ENCODE measurements at regions of chr12 and their contacts with region 1.

Region 1: DNA sequence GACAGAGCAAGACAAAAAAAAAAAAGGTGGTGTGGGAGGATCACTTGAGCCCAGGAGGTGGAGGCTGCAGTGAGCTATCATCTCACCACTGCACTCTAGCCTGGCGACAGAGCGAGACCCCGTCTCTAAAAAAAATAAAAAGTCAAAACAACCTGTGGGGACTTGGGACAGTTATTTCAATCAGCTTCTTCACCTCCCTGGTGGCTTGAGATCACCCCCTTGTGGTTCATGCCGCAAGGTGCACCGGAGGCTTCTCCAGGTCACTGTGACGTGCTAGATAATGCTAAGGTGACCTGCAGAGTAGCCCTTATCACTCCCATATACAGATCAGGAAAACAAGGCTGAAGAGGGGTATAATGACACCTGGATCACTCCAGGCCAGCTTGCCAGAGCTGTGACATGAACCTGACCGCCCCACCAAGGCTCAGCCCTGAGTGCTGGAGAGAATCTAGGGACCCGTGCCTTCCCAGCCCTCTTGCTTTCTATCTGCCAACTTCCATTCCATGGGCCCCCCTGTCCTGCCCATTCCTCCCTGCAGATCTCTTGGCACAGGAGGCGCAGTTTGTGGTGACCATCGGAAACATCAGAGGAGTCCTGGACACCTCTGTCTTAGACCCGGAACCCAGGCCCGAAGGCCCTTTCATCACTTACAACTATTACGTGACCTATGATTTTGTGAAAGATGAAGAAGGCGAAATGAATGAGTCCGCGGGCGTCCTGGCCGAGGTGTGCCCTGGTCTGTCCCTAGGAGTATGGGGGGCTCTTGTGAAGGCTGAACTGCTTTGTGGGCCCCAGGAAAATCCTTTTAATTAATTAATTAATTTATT is 8.1 kb downstream of the LRRC43 start:
- DNase-seq: peak; percentile 87
- H3K4me3 ChIP-seq: no peak overlapping the region; a peak in 1 of 4 replicates
- H3K27ac ChIP-seq: no peak overlapping the region
- H3K4me1 ChIP-seq: no peaks in the 10 kb centered on the region
- H3K27me3 ChIP-seq: no peaks in the 10 kb centered on the region
- CTCF ChIP-seq: peak; percentile 86
- EP300 ChIP-seq: no peak
- RAD21 ChIP-seq: peak; percentile 90

Region 2: GRCh38 chr12:122090759-122091515 is 100.1 kb before region 1 on chr12:
- CTCF ChIA-PET with region 1: no interaction called
- POLR2A ChIA-PET with region 1: no interaction called
- DNase-seq: no peak
- H3K4me3 ChIP-seq: no peak overlapping the region
- H3K27ac ChIP-seq: peak overlapping the region in 1 of 2 experiments; percentile 89; a peak in 2 of 4 replicates
- H3K4me1 ChIP-seq: peaks cover 9 to 11% of the 10 kb centered on the region in 2 experiments; a peak in 2 of 4 replicates
- H3K27me3 ChIP-seq: no peaks in the 10 kb centered on the region
- CTCF ChIP-seq: no peak
- EP300 ChIP-seq: no peak
- RAD21 ChIP-seq: no peak

Region 3: GRCh38 chr12:122137681-122138080 is 53.4 kb before region 1 on chr12:
- CTCF ChIA-PET with region 1: interaction called, 85 read pairs
- POLR2A ChIA-PET with region 1: no interaction called
- DNase-seq: no peak
- H3K4me3 ChIP-seq: no peak overlapping the region
- H3K27ac ChIP-seq: no peak overlapping the region
- H3K4me1 ChIP-seq: no peaks in the 10 kb centered on the region
- H3K27me3 ChIP-seq: no peaks in the 10 kb centered on the region
- CTCF ChIP-seq: no peak
- EP300 ChIP-seq: no peak
- RAD21 ChIP-seq: no peak

Region 4: GRCh38 chr12:122148657-122149056 is 42.4 kb before region 1 on chr12:
- CTCF ChIA-PET with region 1: interaction called, 51 read pairs
- POLR2A ChIA-PET with region 1: no interaction called
- DNase-seq: no peak
- H3K4me3 ChIP-seq: no peak overlapping the region
- H3K27ac ChIP-seq: no peak overlapping the region
- H3K4me1 ChIP-seq: peaks cover 0 to 2% of the 10 kb centered on the region in 2 experiments; a peak in 1 of 4 replicates
- H3K27me3 ChIP-seq: no peaks in the 10 kb centered on the region
- CTCF ChIP-seq: no peak
- EP300 ChIP-seq: no peak
- RAD21 ChIP-seq: no peak

Region 5: GRCh38 chr12:122159882-122160281 is 31.2 kb before region 1 on chr12:
- CTCF ChIA-PET with region 1: interaction called, 21 read pairs
- POLR2A ChIA-PET with region 1: no interaction called
- DNase-seq: peak; percentile 27
- H3K4me3 ChIP-seq: no peak overlapping the region
- H3K27ac ChIP-seq: no peak overlapping the region
- H3K4me1 ChIP-seq: peaks cover 0 to 3% of the 10 kb centered on the region in 2 experiments; a peak in 1 of 4 replicates
- H3K27me3 ChIP-seq: no peaks in the 10 kb centered on the region
- CTCF ChIP-seq: no peak
- EP300 ChIP-seq: no peak
- RAD21 ChIP-seq: peak; percentile 49

Region 6: DNA sequence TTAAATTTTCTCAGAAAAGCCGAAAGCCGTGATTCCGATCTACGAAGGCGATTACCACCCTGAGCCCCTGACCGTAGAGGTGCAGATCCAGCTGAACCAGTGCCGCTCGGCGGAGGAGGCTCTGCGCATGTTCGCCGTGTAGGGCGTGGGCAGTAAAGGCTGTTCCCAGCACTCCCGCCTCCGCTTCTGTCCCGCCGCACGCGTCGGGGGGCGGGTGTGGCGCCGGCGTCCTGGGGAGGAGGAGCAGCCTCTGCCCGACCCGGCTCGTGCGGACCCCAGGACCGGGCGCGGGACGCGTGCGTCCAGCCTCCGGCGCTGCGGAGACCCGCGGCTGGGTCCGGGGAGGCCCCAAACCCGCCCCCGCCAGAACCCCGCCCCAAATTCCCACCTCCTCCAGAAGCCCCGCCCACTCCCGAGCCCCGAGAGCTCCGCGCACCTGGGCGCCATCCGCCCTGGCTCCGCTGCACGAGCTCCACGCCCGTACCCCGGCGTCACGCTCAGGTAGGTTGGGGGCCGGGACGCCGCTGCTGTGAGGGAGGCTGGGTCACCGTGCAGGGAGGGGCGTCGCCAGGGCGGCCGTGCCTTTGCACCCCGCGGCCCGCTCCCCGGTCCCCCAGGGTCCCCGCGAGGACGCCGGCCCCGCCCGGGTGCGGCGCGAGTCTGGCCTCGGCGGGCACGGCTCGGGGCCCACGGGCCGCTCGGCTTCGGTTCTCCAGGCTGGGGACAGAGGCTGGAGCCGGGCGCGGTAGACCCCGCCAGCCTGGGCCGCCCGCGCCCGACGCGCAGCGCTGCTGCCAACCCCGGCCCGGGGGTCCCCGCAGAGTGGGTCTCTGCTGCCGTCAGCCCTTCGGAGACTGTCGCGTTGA is 12.5 kb after region 1 on chr12 and contains the start of gene B3GNT4:
- CTCF ChIA-PET with region 1: interaction called, 30 read pairs
- POLR2A ChIA-PET with region 1: no interaction called
- DNase-seq: peak; percentile 85
- H3K4me3 ChIP-seq: peak within 1 kb of the TSS; percentile 55 to 69
- H3K27ac ChIP-seq: peak within 1 kb of the TSS in 1 of 2 experiments; percentile 39; a peak in 1 of 4 replicates
- H3K4me1 ChIP-seq: peaks cover 0 to 27% of the 10 kb centered on the region in 2 experiments; a peak in 2 of 4 replicates
- H3K27me3 ChIP-seq: no peaks in the 10 kb centered on the region
- CTCF ChIP-seq: no peak
- EP300 ChIP-seq: no peak
- RAD21 ChIP-seq: no peak
- polyA plus RNA-seq, gene B3GNT4: 0.81 and 0.84 TPM in 2 replicates

Region 7: GRCh38 chr12:122282066-122282465 is 91.0 kb after region 1 on chr12:
- CTCF ChIA-PET with region 1: no interaction called
- POLR2A ChIA-PET with region 1: no interaction called
- DNase-seq: no peak
- H3K4me3 ChIP-seq: no peak overlapping the region
- H3K27ac ChIP-seq: peak overlapping the region in 1 of 2 experiments; percentile 72; a peak in 2 of 4 replicates
- H3K4me1 ChIP-seq: peaks cover 2 to 9% of the 10 kb centered on the region in 2 experiments; a peak in 3 of 4 replicates
- H3K27me3 ChIP-seq: no peaks in the 10 kb centered on the region
- CTCF ChIP-seq: no peak
- EP300 ChIP-seq: 0 out of 4 replicates have a peak, but pooled peaks of 1 of the 2 experiments have one; percentile 11
- RAD21 ChIP-seq: no peak

Region 8: GRCh38 chr12:122813310-122813713 is 622.3 kb after region 1 on chr12:
- CTCF ChIA-PET with region 1: no interaction called
- POLR2A ChIA-PET with region 1: no interaction called
- DNase-seq: no peak
- H3K4me3 ChIP-seq: no peak overlapping the region
- H3K27ac ChIP-seq: no peak overlapping the region
- H3K4me1 ChIP-seq: no peaks in the 10 kb centered on the region
- H3K27me3 ChIP-seq: no peaks in the 10 kb centered on the region
- CTCF ChIP-seq: no peak
- EP300 ChIP-seq: no peak
- RAD21 ChIP-seq: no peak

Measured in SK-N-SH (cell line).